H1 (cell line): ENCODE measurements at regions of chr5 and their contacts with region 1.

Region 1: DNA sequence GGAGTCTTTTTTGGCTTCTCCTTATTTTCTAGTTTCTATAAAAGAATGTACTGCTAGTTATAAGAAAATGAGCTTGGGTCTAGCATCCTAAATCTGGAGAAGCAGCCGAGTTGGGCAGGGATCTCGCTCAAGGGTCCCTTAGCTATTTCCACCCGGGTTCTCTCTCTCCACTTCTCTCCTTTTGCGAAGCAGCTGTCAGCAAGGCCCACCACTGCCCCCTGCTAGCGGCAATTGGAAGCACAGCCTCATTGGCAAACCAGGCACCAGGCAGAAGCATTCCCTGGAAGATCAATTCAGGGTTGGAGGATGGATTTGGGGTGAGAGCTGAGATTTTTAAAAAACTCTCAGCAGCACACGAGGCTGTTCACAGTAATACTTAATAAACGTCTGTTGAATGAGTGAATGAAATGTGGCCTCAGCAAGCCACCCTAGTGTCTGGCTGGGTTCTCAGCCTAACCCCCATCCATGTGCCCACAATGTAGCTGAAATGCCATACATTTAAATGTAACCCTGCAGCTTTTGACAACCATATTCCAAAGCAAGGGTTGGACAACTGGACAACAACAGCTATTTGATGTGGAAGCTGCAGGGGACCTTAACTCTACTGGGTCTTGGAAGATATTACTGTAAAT is 34.6 kb upstream of the TNIP1 start:
- DNase-seq: peak; percentile 58 to 90
- H3K4me3 ChIP-seq: no peak overlapping the region
- H3K27ac ChIP-seq: no peak overlapping the region
- H3K4me1 ChIP-seq: no peaks in the 10 kb centered on the region
- H3K27me3 ChIP-seq: no peaks in the 10 kb centered on the region
- CTCF ChIP-seq: peak; percentile 88 to 94 (median 92)
- EP300 ChIP-seq: no peak
- POLR2A ChIP-seq: no peak
- RAD21 ChIP-seq: peak; percentile 91

Region 2: DNA sequence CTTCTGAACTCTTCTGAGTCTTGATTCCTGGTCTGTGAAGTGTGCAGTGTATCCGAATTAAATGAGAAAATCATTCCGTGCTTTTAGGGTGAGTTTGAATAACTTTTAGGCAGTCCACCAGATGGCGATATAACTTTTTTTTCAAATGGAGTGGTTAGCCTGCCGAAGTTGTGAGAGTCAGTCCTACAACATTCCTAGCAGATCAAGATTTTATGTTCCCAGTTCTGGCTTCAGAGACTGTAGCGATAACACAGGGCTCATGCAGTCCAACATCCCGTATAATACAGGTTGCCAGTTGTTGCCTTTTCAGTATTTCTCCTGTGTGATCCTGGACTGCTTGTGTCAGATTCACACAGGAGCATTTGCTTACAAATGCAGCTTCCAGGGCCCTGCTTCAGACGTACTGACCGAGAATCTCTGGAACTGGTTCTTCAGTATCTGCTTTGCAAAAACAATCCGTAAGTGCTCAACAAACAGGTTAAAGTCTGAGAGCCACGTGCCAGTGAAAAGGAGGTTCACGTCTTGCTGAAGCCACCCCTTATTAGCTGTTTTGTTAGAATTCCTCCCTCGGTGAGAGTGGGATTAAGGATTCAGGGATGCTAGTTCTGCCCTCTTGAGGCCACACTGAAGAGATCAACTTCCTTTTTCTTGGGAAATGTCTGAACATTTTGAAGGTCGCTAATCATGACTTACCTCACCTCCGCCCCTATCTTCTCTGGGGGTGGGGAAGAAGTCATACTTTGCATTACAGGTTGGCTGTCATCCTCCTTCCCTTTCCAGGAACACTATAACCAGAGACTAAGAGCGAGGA is 314.1 kb before region 1 on chr5:
- CTCF ChIA-PET with region 1: interaction called, 12 read pairs
- POLR2A ChIA-PET with region 1: no interaction called
- DNase-seq: peak in 1 of 2 experiments; percentile 75
- H3K4me3 ChIP-seq: peak overlapping the region; percentile 52 to 60 (median 56)
- H3K27ac ChIP-seq: 0 out of 2 replicates have a peak overlapping the region, but pooled peaks have one; percentile 5
- H3K4me1 ChIP-seq: peaks cover 0 to 3% (median 0%) of the 10 kb centered on the region in 4 experiments; a peak in 1 of 7 replicates
- H3K27me3 ChIP-seq: no peaks in the 10 kb centered on the region
- CTCF ChIP-seq: peak in 2 of 3 experiments; percentile 57 to 72; a peak in 3 of 4 replicates
- EP300 ChIP-seq: no peak
- POLR2A ChIP-seq: no peak
- RAD21 ChIP-seq: peak; percentile 62 to 70

Region 3: GRCh38 chr5:151037561-151038411 is 77.6 kb before region 1 on chr5:
- CTCF ChIA-PET with region 1: interaction called, 18 read pairs
- POLR2A ChIA-PET with region 1: no interaction called
- DNase-seq: no peak
- H3K4me3 ChIP-seq: no peak overlapping the region
- H3K27ac ChIP-seq: no peak overlapping the region
- H3K4me1 ChIP-seq: no peaks in the 10 kb centered on the region
- H3K27me3 ChIP-seq: no peaks in the 10 kb centered on the region
- CTCF ChIP-seq: no peak
- EP300 ChIP-seq: no peak
- POLR2A ChIP-seq: no peak
- RAD21 ChIP-seq: no peak

Region 4: GRCh38 chr5:151080623-151081430 is 34.6 kb before region 1 on chr5 and contains the start of gene TNIP1:
- CTCF ChIA-PET with region 1: interaction called, 172 read pairs
- POLR2A ChIA-PET with region 1: interaction called, 4 read pairs
- DNase-seq: peak; percentile 53 to 92
- H3K4me3 ChIP-seq: peak within 1 kb of the TSS; percentile 71 to 93 (median 80)
- H3K27ac ChIP-seq: peak within 1 kb of the TSS; percentile 71
- H3K4me1 ChIP-seq: peaks cover 1 to 6% (median 4%) of the 10 kb centered on the region in 4 experiments
- H3K27me3 ChIP-seq: no peaks in the 10 kb centered on the region
- CTCF ChIP-seq: no peak
- EP300 ChIP-seq: no peak
- POLR2A ChIP-seq: peak; percentile 22 to 31; a peak in 1 of 3 replicates
- RAD21 ChIP-seq: no peak
- total RNA-seq, gene TNIP1: 31.9 and 33.9 TPM in 2 replicates

Region 5: GRCh38 chr5:151093476-151093889 is 21.9 kb before region 1 on chr5:
- CTCF ChIA-PET with region 1: interaction called, 96 read pairs
- POLR2A ChIA-PET with region 1: no interaction called
- DNase-seq: no peak
- H3K4me3 ChIP-seq: no peak overlapping the region
- H3K27ac ChIP-seq: no peak overlapping the region
- H3K4me1 ChIP-seq: peaks cover 1 to 20% (median 11%) of the 10 kb centered on the region in 4 experiments; a peak in 4 of 7 replicates
- H3K27me3 ChIP-seq: no peaks in the 10 kb centered on the region; a peak in 2 of 7 replicates
- CTCF ChIP-seq: no peak
- EP300 ChIP-seq: no peak
- POLR2A ChIP-seq: no peak
- RAD21 ChIP-seq: no peak

Region 6: GRCh38 chr5:151126199-151126645 is 10.8 kb after region 1 on chr5:
- CTCF ChIA-PET with region 1: interaction called, 92 read pairs
- POLR2A ChIA-PET with region 1: interaction called, 4 read pairs
- DNase-seq: peak; percentile 29 to 85
- H3K4me3 ChIP-seq: no peak overlapping the region
- H3K27ac ChIP-seq: no peak overlapping the region
- H3K4me1 ChIP-seq: peaks cover 0 to 3% (median 0%) of the 10 kb centered on the region in 4 experiments; a peak in 3 of 7 replicates
- H3K27me3 ChIP-seq: no peaks in the 10 kb centered on the region
- CTCF ChIP-seq: peak; percentile 85 to 94 (median 87)
- EP300 ChIP-seq: no peak
- POLR2A ChIP-seq: no peak
- RAD21 ChIP-seq: peak; percentile 85 to 90

Region 7: GRCh38 chr5:151141535-151141934 is 26.1 kb after region 1 on chr5:
- CTCF ChIA-PET with region 1: interaction called, 29 read pairs
- POLR2A ChIA-PET with region 1: no interaction called
- DNase-seq: peak in 1 of 2 experiments; percentile 58
- H3K4me3 ChIP-seq: no peak overlapping the region
- H3K27ac ChIP-seq: peak overlapping the region; percentile 34; the same call in 1 of the 2 replicates
- H3K4me1 ChIP-seq: peaks cover 0 to 12% (median 7%) of the 10 kb centered on the region in 4 experiments; a peak in 5 of 7 replicates
- H3K27me3 ChIP-seq: no peaks in the 10 kb centered on the region; a peak in 1 of 7 replicates
- CTCF ChIP-seq: no peak
- EP300 ChIP-seq: no peak
- POLR2A ChIP-seq: peak in 1 of 2 experiments; percentile 32; a peak in 1 of 3 replicates
- RAD21 ChIP-seq: no peak